Activated CD8-positive, alpha-beta memory T cell treated with anti-CD3 and anti-CD28 coated beads, Interleukin-2, amount 10 ng/mL, durations not matched to agents 7 days and 5 days (primary cell): ENCODE measurements at regions of chr2 and their contacts with region 1.

Region 1: GRCh38 chr2:162058973-162059668 is 14.9 kb downstream of the DPP4 start:
- DNase-seq: peak; percentile 48
- ATAC-seq: peak; percentile 60
- H3K4me3 Mint-ChIP-seq: peak overlapping the region; percentile 73
- H3K27ac Mint-ChIP-seq: peak overlapping the region; percentile 95
- H3K4me1 Mint-ChIP-seq: peaks cover 86% of the 10 kb centered on the region
- H3K27me3 Mint-ChIP-seq: no peaks in the 10 kb centered on the region

Region 2: DNA sequence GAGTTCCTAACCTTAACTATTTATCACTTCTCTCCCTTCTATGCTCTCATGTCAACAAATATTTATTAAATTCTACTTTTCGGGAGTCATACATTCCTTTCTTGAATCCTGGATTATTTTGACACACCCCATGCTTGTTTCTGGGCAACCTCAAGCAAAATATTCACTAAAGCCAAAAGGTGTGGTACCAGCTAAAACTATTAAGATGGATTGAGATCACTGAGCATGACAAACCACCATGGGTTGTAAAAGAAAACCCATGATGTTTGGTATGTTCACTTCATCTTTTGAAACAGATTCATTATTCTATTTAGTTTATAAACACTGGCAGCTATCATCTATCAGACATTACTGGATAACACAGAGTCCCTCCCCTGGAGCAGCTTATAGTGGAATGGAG is 17.6 kb before region 1 on chr2:
- CTCF ChIA-PET with region 1: no interaction called
- DNase-seq: no peak
- ATAC-seq: no peak
- H3K4me3 Mint-ChIP-seq: no peak overlapping the region
- H3K27ac Mint-ChIP-seq: no peak overlapping the region
- H3K4me1 Mint-ChIP-seq: peaks cover 8% of the 10 kb centered on the region
- H3K27me3 Mint-ChIP-seq: no peaks in the 10 kb centered on the region

Region 3: GRCh38 chr2:162073888-162074645 is 14.9 kb after region 1 on chr2 and contains the start of gene DPP4:
- CTCF ChIA-PET with region 1: interaction called, 38 read pairs
- DNase-seq: peak; percentile 69
- ATAC-seq: peak; percentile 84
- H3K4me3 Mint-ChIP-seq: peak within 1 kb of the TSS; percentile 95
- H3K27ac Mint-ChIP-seq: peak within 1 kb of the TSS; percentile 88
- H3K4me1 Mint-ChIP-seq: peaks cover 44% of the 10 kb centered on the region
- H3K27me3 Mint-ChIP-seq: no peaks in the 10 kb centered on the region
- total RNA-seq, gene DPP4: 106 to 115 TPM